BJ (cell line): ENCODE measurements at regions of chr3 and their contacts with region 1.

Region 1: DNA sequence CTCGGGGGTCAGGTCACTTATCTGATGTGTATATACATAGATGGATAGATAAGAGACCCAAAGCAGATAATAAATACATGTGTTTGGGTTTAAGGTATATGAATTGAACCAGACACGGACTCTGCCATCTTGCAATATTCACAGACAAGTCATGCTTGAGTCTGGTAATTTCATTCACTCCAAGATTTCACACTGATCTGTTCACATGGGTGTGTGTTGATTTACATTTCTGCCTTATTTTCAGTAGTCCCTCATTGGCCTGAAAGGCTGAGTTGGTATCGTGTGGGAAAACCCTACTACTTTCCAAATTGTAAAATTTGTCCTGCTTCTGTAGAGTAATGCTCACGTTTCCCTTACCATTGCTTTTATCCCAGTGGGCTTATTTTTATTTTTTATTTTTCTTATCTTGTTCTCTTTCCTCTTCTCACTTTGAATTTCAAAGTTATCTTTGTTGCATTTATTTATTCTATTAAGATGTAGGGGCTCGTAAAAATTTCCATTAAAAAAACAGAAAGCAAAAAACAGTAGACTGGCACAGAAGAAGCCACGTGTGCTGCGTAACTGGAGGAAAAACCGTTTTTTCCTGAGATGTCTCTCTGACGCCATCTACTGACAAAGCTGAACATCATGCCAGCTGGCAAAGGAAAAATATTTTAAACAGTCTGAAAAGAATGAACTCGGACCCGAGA is 10.8 kb upstream of the MFSD1 start:
- DNase-seq: no peak
- H3K4me3 ChIP-seq: no peak overlapping the region
- H3K27me3 ChIP-seq: no peaks in the 10 kb centered on the region
- CTCF ChIP-seq: peak; percentile 79

Region 2: DNA sequence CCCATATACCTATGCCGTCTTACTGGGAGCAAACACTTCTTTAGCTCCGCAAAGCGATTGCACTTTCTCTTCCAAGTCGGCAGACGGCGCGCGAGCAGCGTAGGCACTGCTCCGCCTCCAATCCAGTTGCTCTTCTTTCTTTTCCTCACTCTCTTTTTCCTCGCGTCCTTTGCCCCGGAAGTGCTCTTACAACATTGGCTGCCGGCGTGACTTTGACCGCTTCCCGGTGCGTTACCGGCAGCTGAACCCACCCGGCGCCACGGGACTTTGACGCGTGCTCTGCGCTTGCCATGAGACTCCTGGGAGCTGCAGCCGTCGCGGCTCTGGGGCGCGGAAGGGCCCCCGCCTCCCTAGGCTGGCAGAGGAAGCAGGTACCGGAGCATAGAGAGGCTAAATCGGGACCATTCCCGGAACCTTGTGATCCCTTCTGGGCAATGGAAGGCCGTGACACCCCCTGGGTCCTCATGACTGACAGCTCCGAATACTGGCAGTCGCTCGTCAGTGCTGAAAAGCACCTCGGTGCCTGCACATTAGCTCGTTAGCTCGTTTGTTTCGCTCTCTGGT is 146.6 kb before region 1 on chr3 and contains the start of gene GFM1:
- CTCF ChIA-PET with region 1: interaction called, 32 read pairs
- POLR2A ChIA-PET with region 1: no interaction called
- DNase-seq: peak; percentile 80
- H3K4me3 ChIP-seq: peak within 1 kb of the TSS; percentile 99
- H3K27me3 ChIP-seq: no peaks in the 10 kb centered on the region
- CTCF ChIP-seq: peak; percentile 94
- polyA plus RNA-seq, gene GFM1: 13.9 and 25.6 TPM in 2 replicates

Region 3: DNA sequence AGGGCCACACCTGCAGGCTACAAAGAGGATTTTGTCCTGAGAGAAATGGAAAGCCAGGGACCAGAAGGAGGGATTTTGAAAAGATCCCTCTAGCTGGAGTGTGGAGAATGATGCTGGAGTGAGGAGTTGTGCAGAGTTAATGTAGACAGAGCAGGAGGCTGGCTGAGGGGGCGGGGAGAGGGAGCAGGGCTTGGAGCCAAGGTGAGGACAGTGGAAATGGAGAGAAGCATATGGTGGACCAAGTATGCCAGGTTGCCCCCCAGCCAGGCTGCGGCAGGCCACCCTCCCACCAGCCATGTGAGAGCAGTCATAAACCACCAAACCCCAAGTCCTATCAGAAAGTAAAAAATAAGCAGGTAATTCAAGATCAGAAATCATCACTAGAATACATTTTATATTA is 73.5 kb before region 1 on chr3:
- CTCF ChIA-PET with region 1: interaction called, 31 read pairs
- POLR2A ChIA-PET with region 1: no interaction called
- DNase-seq: no peak
- H3K4me3 ChIP-seq: no peak overlapping the region
- H3K27me3 ChIP-seq: no peaks in the 10 kb centered on the region
- CTCF ChIP-seq: no peak

Region 4: DNA sequence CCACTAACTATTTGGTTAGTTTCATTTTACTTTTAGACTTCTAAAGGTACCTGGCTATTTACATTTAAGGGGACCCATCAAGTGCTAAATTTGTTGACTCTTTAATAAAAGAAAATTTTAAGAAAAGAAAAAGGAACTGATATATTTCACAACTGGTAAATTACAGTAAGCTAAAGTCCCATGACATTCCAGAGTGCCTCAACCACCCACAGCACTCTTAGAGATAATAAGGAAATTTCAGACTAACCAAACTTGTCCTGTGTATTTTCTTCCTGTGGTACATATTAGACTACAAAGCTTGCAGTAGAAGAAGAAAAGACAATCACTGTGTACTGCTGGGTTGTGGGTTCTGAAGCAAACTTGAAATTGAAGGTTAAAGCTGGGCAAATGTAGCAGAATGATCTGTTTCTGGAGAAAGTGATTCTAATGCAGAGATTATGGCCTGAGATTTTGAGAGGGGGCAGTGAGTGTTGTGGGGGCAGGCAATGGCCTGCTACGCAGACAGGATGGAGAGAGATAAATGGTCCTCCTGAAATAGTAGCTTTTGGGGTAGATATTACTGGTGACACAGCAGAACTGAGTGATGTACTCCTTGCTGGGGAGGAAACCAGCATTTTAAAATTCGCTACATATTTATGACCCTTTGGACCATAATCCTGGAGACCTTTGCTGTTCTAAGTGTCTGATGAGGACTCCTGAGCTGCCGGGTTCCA is 13.7 kb before region 1 on chr3:
- CTCF ChIA-PET with region 1: interaction called, 14 read pairs
- POLR2A ChIA-PET with region 1: no interaction called
- DNase-seq: no peak
- H3K4me3 ChIP-seq: no peak overlapping the region
- H3K27me3 ChIP-seq: no peaks in the 10 kb centered on the region
- CTCF ChIP-seq: no peak

Region 5: DNA sequence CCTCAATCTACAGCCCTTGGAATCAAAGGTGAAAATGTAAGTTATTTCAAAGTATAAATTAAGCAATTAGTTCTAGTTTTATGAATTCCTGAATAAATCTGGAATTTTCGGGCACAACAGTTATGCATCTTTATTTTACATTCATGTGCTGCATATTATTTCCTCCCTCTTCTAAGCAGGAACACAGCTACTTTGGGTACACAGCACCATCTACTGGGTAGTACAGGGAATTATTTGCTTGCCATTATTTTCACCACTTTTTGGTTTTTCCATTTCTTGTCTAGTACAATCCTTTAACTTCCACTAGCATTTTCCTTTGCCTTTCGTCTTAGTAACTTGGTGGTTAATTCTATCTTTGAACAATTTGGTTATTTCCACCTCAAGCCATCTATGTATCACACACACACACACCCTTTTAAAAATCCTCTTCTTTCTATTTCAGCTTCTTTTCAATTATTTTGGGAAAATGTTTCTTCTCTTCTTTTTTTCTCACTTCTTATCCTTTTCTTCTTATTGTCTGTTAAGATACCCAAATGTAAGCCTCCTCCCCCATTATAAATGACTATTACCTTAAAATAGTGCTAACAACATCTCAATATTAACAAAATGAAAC is 461.8 kb after region 1 on chr3:
- CTCF ChIA-PET with region 1: interaction called, 20 read pairs
- POLR2A ChIA-PET with region 1: no interaction called
- DNase-seq: no peak
- H3K4me3 ChIP-seq: no peak overlapping the region
- H3K27me3 ChIP-seq: no peaks in the 10 kb centered on the region
- CTCF ChIP-seq: peak; percentile 65